ENCODE measurements at regions of chr5 and their contacts with region 1.

Region 1: DNA sequence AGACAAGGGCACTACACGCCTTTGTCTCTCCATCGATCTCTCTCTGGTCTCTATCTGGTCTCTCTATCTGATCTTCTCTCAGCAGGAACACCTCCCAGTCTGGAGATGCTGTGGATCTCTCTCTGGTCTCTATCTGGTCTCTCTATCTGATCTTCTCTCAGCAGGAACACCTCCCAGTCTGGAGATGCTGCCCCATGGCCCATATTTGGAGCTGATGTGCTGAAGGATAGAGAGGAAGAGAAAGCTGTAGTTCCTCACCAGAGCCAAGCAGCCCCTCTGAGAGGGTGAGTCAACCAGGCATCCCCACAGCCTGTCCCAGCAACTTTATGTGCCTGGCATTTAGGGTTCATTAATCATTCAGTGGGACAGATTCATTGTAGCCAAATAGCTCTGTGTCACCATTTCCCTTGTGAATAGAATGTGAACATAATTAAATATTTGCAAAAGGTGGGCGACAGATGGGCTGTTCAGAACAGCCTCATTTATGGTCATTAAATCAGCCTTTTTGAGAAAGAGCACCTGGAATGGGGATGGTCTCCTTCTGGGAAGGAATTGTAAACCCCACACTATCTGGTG is 189.3 kb upstream of the MAST4 start:
- DNase-seq: no peak
- ATAC-seq: peak in 1 of 8 donors; percentile 13
- H3K4me3 ChIP-seq: no peak overlapping the region
- H3K27ac ChIP-seq: no peak overlapping the region
- H3K4me1 ChIP-seq: peaks cover 0 to 14% (median 0%) of the 10 kb centered on the region in 9 donors
- H3K27me3 ChIP-seq: no peaks in the 10 kb centered on the region
- CTCF ChIP-seq: no peak

Region 2: DNA sequence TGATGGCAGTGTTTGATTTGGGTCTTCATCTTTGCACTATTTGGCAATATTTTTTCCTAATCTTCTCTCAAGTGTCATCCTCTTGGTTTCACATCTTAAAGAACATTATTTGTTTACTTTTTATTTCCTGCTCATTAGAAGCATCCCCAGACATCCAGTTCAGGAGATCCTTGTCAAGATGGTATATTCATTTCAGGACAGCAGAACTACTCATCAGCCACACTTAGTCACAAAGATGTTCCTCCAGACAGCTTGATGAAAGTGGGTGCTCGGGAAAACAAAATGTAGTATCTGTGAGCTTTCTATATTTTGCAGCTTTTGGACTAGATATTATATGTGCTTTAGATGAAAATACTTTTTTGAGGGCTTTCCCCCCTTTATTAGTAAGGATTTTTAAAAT is 334.8 kb before region 1 on chr5:
- intact Hi-C with region 1: no loop called
- DNase-seq: no peak
- ATAC-seq: no peak
- H3K4me3 ChIP-seq: no peak overlapping the region
- H3K27ac ChIP-seq: no peak overlapping the region
- H3K4me1 ChIP-seq: no peaks in the 10 kb centered on the region
- H3K27me3 ChIP-seq: no peaks in the 10 kb centered on the region
- CTCF ChIP-seq: no peak

Region 3: DNA sequence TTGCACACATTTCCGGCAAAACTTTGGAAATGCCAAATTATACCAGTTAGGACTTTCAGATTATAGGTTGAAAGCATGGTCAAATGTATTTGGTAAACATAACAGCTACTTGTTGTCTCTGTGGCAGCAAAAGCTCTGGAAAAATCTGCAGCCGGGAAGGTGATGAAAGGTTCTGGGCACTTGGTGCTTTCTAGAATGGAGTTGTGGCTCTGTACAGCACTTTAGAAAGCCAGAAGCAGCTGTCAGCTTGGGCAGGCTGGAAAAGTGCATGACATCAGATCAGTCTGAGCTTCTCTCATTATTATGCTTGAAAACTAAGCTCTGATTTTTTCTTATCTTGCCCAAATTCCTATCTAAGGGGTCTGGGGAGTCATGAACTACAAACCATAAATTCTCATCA is 70.7 kb after region 1 on chr5:
- intact Hi-C with region 1: loop called in 1 of 10 experiments (anchors 2 kb)
- DNase-seq: peak; percentile 13 to 23
- ATAC-seq: peak in 7 of 8 donors; percentile 48 to 92 (median 81)
- H3K4me3 ChIP-seq: no peak overlapping the region
- H3K27ac ChIP-seq: no peak overlapping the region
- H3K4me1 ChIP-seq: peaks cover 0 to 6% (median 0%) of the 10 kb centered on the region in 9 donors
- H3K27me3 ChIP-seq: no peaks in the 10 kb centered on the region
- CTCF ChIP-seq: no peak

Region 4: DNA sequence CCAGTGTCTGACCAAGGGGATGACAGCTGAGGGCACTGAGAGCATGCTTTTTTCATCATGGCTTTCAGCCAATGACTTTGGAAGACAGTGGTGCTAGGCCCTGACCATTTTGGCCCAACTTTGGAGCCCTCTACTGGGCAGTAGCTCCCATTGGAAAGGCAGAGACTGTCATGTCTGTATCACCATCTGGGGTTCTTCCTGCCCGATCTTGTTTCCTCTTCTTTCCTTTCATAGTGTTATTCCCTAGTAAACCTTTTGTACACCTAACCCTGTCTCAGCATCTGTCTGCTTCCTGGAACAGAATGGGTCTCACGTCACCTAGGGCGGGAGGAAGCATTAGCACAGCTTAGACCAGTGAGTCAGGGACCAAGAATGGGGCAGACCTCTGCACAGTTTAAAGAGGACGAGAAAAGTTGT is 92.0 kb after region 1 on chr5:
- intact Hi-C with region 1: loop called in 1 of 10 experiments (anchors 10 kb)
- DNase-seq: peak in 1 of 2 donors; percentile 34
- ATAC-seq: peak; percentile 42 to 93 (median 84)
- H3K4me3 ChIP-seq: no peak overlapping the region
- H3K27ac ChIP-seq: no peak overlapping the region
- H3K4me1 ChIP-seq: peaks cover 0 to 7% (median 0%) of the 10 kb centered on the region in 9 donors
- H3K27me3 ChIP-seq: no peaks in the 10 kb centered on the region
- CTCF ChIP-seq: peak in 8 of 9 donors; percentile 16 to 58 (median 38)

Measured in heart right ventricle (tissue), 16 donors.